ENCODE measurements at regions of chr20 and their contacts with region 1.

Region 1: DNA sequence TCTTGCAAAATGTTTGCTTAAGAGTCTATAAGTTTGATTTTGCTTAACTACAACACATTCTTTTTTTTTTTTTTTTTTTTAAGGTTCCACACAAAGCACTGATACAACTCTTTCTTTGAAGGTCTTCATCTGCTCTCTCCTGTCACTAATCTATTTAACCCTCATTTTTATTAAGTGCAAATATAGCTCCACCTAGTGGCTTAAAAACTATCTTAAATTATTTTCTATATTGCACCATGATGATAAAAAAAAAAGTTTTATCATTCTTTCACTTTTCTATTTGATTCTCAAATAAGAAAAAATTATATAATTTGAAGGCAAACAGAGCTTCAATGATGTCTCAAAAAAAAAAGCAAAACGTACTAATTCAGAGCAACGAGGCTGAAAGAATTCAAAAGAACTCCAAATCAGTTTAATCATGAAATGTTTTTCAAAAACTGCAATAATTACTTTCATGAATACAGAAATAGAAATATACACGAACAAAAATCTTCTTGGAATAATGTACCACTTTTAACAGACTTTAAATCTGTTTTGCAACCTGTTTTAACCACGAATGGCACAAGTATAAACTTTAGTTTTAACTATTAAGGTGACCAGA is 12.8 kb downstream of the ESF1 start:
- DNase-seq: no peak
- H3K4me3 ChIP-seq: no peak overlapping the region
- H3K27ac ChIP-seq: no peak overlapping the region
- H3K4me1 ChIP-seq: no peaks in the 10 kb centered on the region
- H3K27me3 ChIP-seq: no peaks in the 10 kb centered on the region
- CTCF ChIP-seq: peak in 4 of 5 experiments; percentile 44 to 56 (median 49)
- EP300 ChIP-seq: no peak
- POLR2A ChIP-seq: no peak

Region 2: DNA sequence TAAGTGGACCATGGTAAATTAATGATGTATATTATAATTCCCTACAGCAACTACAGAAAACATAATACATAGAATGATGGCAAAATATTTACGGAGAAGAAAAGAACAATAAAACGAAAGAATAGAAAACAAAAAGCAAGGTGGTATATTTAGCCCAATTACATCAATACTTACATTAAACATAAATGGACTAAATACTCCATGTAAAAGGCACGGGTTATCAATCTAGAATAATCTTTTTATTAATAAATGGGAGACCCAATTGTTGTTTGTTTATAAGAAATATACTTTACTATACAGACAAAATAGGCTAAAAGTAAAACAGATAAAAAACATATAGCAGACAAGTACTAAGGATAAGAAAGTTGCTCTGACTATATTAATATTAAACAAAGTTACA is 270.5 kb before region 1 on chr20:
- in situ Hi-C with region 1: no loop called
- intact Hi-C with region 1: no loop called
- DNase-seq: no peak
- H3K4me3 ChIP-seq: no peak overlapping the region
- H3K27ac ChIP-seq: no peak overlapping the region
- H3K4me1 ChIP-seq: peaks cover 0 to 3% (median 0%) of the 10 kb centered on the region in 4 donors
- H3K27me3 ChIP-seq: no peaks in the 10 kb centered on the region
- CTCF ChIP-seq: no peak
- EP300 ChIP-seq: no peak
- POLR2A ChIP-seq: no peak

Region 3: DNA sequence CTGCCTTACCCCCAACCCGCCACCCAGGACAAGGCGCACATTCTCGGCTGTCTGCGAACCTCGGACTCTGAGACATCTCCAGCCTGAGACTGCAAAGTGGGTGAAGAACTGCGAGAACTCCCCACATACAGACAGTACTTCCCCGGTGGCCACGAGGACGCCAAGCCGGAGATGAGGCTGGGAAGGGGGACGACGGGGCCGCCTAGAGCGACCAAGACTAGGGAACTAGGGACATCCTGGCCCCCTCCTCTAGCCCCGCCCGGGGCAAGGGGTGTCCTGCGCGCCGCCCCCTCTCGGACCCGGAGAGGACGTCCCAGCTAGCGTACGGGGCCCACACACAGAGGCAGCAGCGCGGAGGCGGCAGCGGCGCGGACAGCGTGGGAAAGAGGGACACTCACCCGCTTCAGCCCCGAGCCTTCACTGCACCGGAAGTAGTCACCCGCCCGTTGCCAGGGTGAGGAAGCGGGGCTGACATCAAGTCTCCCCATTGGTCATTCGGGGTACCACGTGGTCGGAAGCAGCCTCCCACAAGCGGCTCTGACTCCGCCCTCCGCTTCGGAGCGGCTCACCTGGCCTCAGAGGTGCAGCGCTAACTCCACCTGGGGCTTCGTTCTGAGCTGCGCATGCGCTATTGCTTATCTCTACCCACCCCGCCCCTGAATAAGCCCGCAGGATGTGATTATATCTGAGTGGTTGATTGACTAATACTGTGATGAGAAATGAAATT is 133.3 kb before region 1 on chr20 and contains the start of gene TASP1:
- in situ Hi-C with region 1: loop called in 1 of 4 experiments (anchors 10 kb)
- intact Hi-C with region 1: no loop called
- DNase-seq: peak; percentile 98
- H3K4me3 ChIP-seq: peak within 1 kb of the TSS; percentile 72 to 96 (median 88)
- H3K27ac ChIP-seq: peak within 1 kb of the TSS; percentile 77 to 88 (median 81)
- H3K4me1 ChIP-seq: peaks cover 0 to 19% (median 4%) of the 10 kb centered on the region in 4 donors
- H3K27me3 ChIP-seq: no peaks in the 10 kb centered on the region
- CTCF ChIP-seq: no peak
- EP300 ChIP-seq: no peak
- POLR2A ChIP-seq: peak; percentile 61
- total RNA-seq, gene TASP1: 3.0 to 18.1 (median 12.9) TPM

Measured in transverse colon (tissue), 4 donors.